HCT116 (cell line): ENCODE measurements at regions of chr3 and their contacts with region 1.

Region 1: DNA sequence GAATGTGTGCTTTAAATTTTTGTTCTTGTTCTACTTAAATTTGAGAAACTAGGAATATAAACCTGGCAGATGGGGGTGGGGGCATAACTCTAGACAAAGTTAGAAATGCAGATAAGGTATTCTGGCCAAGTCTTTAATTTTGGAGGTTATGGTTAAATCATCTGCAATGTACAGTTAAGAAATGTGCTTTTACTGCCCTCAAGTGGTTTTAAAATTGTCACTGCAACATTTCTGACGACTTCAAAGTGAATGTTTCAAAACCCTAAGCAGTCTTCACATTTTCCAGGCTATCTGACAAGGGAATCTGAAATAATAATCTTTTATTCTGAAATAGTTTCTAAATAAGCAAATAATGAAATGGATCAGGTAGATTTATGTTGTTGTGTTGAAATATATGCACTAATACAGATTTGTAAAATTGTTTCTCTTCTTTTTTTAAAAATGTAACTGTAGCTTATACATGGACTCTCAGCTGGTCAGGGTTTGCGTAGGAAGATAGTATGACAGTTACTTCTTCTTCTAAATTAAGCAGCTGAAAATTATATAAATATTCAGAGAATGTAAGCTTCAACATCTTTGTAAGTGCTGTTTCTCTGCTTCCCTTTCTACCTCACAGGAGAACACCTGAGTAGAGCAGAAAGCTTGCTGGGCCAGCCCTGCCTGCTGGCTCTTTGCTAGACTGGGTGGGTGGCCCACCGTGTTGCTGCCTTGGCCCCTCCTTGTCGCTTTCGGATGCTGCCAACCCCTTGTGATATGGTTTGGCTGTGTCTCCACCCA is 45.0 kb downstream of the SUCNR1 start:
- DNase-seq: peak; percentile 50
- ATAC-seq: peak; percentile 74
- H3K4me3 ChIP-seq: no peak overlapping the region
- H3K27ac ChIP-seq: no peak overlapping the region
- H3K4me1 ChIP-seq: 0 out of 4 replicates have a peak, but pooled peaks cover 0 to under 1% of the 10 kb centered on the region in 2 experiments
- H3K27me3 ChIP-seq: no peaks in the 10 kb centered on the region
- CTCF ChIP-seq: peak; percentile 50 to 71 (median 71)
- POLR2A ChIP-seq: no peak
- RAD21 ChIP-seq: peak; percentile 83

Region 2: DNA sequence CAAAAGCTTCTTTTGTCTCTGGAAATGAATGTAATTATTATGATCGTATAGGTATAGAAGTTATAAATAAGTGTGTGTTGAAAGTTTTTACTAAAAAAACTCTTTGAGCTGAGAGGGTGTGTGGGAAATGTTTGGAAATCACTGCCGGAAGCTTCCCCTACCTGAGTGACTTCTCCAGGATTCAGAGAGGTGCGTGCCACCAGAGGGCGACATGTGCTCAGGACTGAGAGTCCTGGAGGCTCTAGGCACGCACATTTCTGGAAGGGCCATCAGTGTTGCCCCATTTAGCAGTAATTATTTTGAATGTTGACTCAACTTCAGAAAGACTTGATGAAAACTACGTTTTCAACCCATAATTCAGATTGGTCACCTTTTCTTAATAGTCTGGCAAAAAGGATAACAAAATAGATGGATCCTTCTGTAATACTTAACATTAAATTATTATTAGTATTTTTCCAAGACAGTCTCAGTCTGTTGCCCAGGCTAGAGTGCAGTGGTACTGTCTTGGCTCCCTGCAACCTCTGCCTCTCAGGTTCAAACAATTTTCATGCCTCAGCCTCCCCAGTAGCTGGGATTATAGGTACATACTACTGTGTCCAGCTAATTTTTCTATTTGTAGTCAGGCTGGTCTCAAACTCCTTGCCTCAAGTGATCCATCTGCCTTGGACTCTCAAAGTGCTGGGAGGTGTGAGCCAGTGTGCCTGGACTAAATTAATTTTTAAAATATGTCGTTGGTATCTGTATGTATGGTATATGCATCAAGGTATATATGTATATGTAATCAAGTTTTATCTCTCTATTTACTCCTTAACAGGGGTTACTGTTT is 750.0 kb before region 1 on chr3:
- CTCF ChIA-PET with region 1: no interaction called
- POLR2A ChIA-PET with region 1: no interaction called
- RAD21 ChIA-PET with region 1: no interaction called
- intact Hi-C with region 1: loop called (anchors 5 kb)
- DNase-seq: peak; percentile 47
- ATAC-seq: peak; percentile 99
- H3K4me3 ChIP-seq: no peak overlapping the region
- H3K27ac ChIP-seq: no peak overlapping the region
- H3K4me1 ChIP-seq: no peaks in the 10 kb centered on the region
- H3K27me3 ChIP-seq: no peaks in the 10 kb centered on the region
- CTCF ChIP-seq: peak; percentile 78 to 90 (median 88)
- POLR2A ChIP-seq: no peak
- RAD21 ChIP-seq: peak; percentile 91

Region 3: GRCh38 chr3:151227807-151228665 is 690.4 kb before region 1 on chr3:
- CTCF ChIA-PET with region 1: no interaction called
- POLR2A ChIA-PET with region 1: no interaction called
- RAD21 ChIA-PET with region 1: no interaction called
- intact Hi-C with region 1: loop called (anchors 5 kb)
- DNase-seq: peak; percentile 54
- ATAC-seq: peak; percentile 94
- H3K4me3 ChIP-seq: no peak overlapping the region
- H3K27ac ChIP-seq: no peak overlapping the region
- H3K4me1 ChIP-seq: peaks cover 0 to 16% of the 10 kb centered on the region in 2 experiments; a peak in 2 of 4 replicates
- H3K27me3 ChIP-seq: no peaks in the 10 kb centered on the region
- CTCF ChIP-seq: peak; percentile 83 to 98 (median 86)
- POLR2A ChIP-seq: no peak
- RAD21 ChIP-seq: peak; percentile 94

Region 4: DNA sequence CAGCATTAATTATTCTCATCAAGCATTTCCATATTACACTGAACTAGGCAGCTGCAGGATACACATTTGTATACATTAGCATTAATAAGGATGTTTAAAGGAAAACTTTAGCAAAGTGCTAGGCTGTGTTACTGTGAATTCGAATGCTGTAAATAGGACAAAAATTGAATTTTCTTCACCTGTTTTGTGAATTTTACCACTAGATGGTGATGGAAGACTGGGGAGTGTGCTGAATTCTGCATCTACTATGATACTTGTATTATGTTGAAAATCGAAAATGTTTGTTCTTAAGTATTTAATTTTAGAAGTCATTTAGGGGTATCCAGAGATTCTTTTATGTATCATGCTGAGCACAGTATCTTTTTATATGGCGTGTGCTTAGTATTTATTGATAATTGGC is 627.8 kb before region 1 on chr3:
- CTCF ChIA-PET with region 1: interaction called, 3 read pairs
- POLR2A ChIA-PET with region 1: no interaction called
- RAD21 ChIA-PET with region 1: no interaction called
- intact Hi-C with region 1: loop called (anchors 1 kb)
- DNase-seq: peak; percentile 29
- ATAC-seq: no peak
- H3K4me3 ChIP-seq: no peak overlapping the region
- H3K27ac ChIP-seq: no peak overlapping the region
- H3K4me1 ChIP-seq: no peaks in the 10 kb centered on the region
- H3K27me3 ChIP-seq: no peaks in the 10 kb centered on the region
- CTCF ChIP-seq: peak; percentile 28 to 76 (median 68); a peak in 5 of 6 replicates
- POLR2A ChIP-seq: no peak
- RAD21 ChIP-seq: peak; percentile 90

Region 5: GRCh38 chr3:151439652-151440129 is 478.8 kb before region 1 on chr3:
- CTCF ChIA-PET with region 1: interaction called, 11 read pairs
- POLR2A ChIA-PET with region 1: no interaction called
- RAD21 ChIA-PET with region 1: no interaction called
- intact Hi-C with region 1: loop called (anchors 1 kb)
- DNase-seq: peak; percentile 53
- ATAC-seq: peak; percentile 94
- H3K4me3 ChIP-seq: no peak overlapping the region
- H3K27ac ChIP-seq: no peak overlapping the region
- H3K4me1 ChIP-seq: no peaks in the 10 kb centered on the region
- H3K27me3 ChIP-seq: no peaks in the 10 kb centered on the region
- CTCF ChIP-seq: peak; percentile 77 to 90 (median 88)
- POLR2A ChIP-seq: no peak
- RAD21 ChIP-seq: peak; percentile 88

Region 6: GRCh38 chr3:152127058-152127457 is 208.6 kb after region 1 on chr3:
- CTCF ChIA-PET with region 1: no interaction called
- POLR2A ChIA-PET with region 1: no interaction called
- RAD21 ChIA-PET with region 1: no interaction called
- intact Hi-C with region 1: no loop called
- DNase-seq: no peak
- ATAC-seq: no peak
- H3K4me3 ChIP-seq: no peak overlapping the region
- H3K27ac ChIP-seq: no peak overlapping the region
- H3K4me1 ChIP-seq: peaks cover 0 to 5% of the 10 kb centered on the region in 2 experiments; a peak in 1 of 4 replicates
- H3K27me3 ChIP-seq: no peaks in the 10 kb centered on the region
- CTCF ChIP-seq: no peak
- POLR2A ChIP-seq: no peak
- RAD21 ChIP-seq: no peak